Caco-2 (cell line): ENCODE measurements at regions of chr10 and their contacts with region 1.

Region 1: DNA sequence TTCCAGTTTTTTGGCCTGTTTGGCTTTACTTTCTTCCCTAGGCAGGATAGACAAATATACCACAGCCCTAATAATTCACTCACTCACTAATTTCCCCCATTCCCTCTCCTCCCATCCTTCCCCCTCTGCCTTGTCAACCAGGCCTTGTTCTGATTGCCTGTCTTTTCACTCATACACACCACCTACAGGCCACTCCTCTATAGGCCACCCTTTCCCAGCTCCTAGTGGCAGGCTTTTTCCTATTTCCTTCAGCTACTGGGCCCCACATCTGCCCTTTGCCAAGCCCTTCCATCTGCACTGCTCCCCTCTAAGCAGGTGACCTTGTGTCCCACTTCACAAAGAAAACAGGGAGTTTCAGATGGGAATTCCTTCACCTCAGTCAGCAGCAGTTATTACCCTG is 59.8 kb upstream of the MSRB2 start:
- DNase-seq: peak in 1 of 2 experiments; percentile 52
- H3K4me3 ChIP-seq: no peak overlapping the region
- H3K4me3 Mint-ChIP-seq: no peak overlapping the region
- H3K27ac Mint-ChIP-seq: no peak overlapping the region
- H3K4me1 ChIP-seq: no peaks in the 10 kb centered on the region
- H3K4me1 Mint-ChIP-seq: no peaks in the 10 kb centered on the region
- H3K27me3 ChIP-seq: no peaks in the 10 kb centered on the region; the same call in 1 of the 2 replicates
- H3K27me3 Mint-ChIP-seq: peaks cover 8% of the 10 kb centered on the region
- CTCF ChIP-seq: peak; percentile 54 to 84

Region 2: GRCh38 chr10:23015021-23015707 is 20.4 kb before region 1 on chr10:
- CTCF ChIA-PET with region 1: interaction called, 3 read pairs
- POLR2A ChIA-PET with region 1: no interaction called
- intact Hi-C with region 1: loop called (anchors 2 kb)
- DNase-seq: no peak
- H3K4me3 ChIP-seq: no peak overlapping the region
- H3K4me3 Mint-ChIP-seq: no peak overlapping the region
- H3K27ac Mint-ChIP-seq: no peak overlapping the region
- H3K4me1 ChIP-seq: no peaks in the 10 kb centered on the region
- H3K4me1 Mint-ChIP-seq: no peaks in the 10 kb centered on the region
- H3K27me3 ChIP-seq: no peaks in the 10 kb centered on the region
- H3K27me3 Mint-ChIP-seq: peaks cover 20% of the 10 kb centered on the region
- CTCF ChIP-seq: no peak

Region 3: GRCh38 chr10:23065181-23065948 is 29.8 kb after region 1 on chr10:
- CTCF ChIA-PET with region 1: no interaction called
- POLR2A ChIA-PET with region 1: no interaction called
- intact Hi-C with region 1: no loop called
- DNase-seq: no peak
- H3K4me3 ChIP-seq: no peak overlapping the region
- H3K4me3 Mint-ChIP-seq: no peak overlapping the region
- H3K27ac Mint-ChIP-seq: no peak overlapping the region
- H3K4me1 ChIP-seq: no peaks in the 10 kb centered on the region
- H3K4me1 Mint-ChIP-seq: no peaks in the 10 kb centered on the region
- H3K27me3 ChIP-seq: no peaks in the 10 kb centered on the region
- H3K27me3 Mint-ChIP-seq: no peaks in the 10 kb centered on the region
- CTCF ChIP-seq: no peak